HepG2 (cell line): ENCODE measurements at regions of chr16 and their contacts with region 1.

Region 1: GRCh38 chr16:14545346-14545884 is 84.6 kb downstream of the PARN start:
- DNase-seq: peak; percentile 95
- ATAC-seq: peak; percentile 95
- H3K4me3 ChIP-seq: peak overlapping the region in 2 of 3 experiments; percentile 26 to 29; a peak in 3 of 6 replicates
- H3K27ac ChIP-seq: peak overlapping the region; percentile 70
- H3K4me1 ChIP-seq: peaks cover 57% of the 10 kb centered on the region
- H3K27me3 ChIP-seq: no peaks in the 10 kb centered on the region
- CTCF ChIP-seq: 0 out of 2 replicates have a peak, but pooled peaks have one; percentile 14
- EP300 ChIP-seq: peak; percentile 72 to 96
- POLR2A ChIP-seq: no peak
- RAD21 ChIP-seq: peak; percentile 59; the same call in 1 of the 2 replicates

Region 2: DNA sequence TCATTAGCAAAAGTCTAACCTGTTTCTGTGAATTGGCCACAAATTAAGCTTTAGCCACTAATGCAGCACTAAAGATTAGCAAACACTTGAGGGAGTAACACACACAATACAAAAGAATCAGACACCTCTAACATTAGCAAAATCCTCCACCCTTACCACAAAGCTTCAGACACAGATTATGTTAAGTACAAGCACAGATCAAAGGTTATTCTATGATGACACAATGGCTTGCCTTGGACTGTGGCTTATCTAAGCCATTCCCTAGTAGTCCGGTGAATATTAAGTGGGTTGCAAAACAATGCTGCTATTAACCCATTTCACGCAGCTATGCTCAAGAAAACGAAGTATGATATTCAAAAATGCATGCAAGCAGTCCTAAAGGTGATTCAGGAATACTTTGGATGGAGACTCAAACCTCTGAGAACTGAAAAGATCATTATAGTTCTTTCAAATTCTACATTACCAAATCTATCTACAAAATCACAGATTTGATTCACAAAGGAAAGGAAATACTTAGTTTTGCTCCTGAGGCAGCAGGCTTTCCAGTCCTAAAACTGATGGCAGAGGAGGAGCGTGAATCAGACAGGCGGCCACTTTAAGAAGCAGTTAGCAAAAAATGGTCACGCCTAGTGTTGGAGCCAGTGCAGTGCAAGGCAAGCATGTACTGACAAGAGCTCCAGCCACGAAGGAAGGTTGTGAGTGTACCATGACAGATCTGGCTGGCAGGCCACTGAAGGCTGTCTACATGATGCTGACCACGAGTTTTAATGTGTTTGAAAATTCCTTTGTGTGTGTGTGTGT is 17.5 kb after region 1 on chr16:
- CTCF ChIA-PET with region 1: no interaction called
- POLR2A ChIA-PET with region 1: interaction called, 21 read pairs
- in situ Hi-C with region 1: no loop called
- intact Hi-C with region 1: loop called (anchors 1 kb)
- DNase-seq: peak; percentile 99
- ATAC-seq: peak; percentile 87
- H3K4me3 ChIP-seq: peak overlapping the region in 1 of 3 experiments; percentile 8; a peak in 1 of 6 replicates
- H3K27ac ChIP-seq: peak overlapping the region; percentile 68
- H3K4me1 ChIP-seq: peaks cover 73% of the 10 kb centered on the region
- H3K27me3 ChIP-seq: no peaks in the 10 kb centered on the region
- CTCF ChIP-seq: 0 out of 2 replicates have a peak, but pooled peaks have one; percentile 11
- EP300 ChIP-seq: peak; percentile 84 to 94; a peak in 3 of 4 replicates
- POLR2A ChIP-seq: no peak; a peak in 1 of 4 replicates
- RAD21 ChIP-seq: peak; percentile 9